ENCODE measurements at regions of chr19 and their contacts with region 1.

Region 1: DNA sequence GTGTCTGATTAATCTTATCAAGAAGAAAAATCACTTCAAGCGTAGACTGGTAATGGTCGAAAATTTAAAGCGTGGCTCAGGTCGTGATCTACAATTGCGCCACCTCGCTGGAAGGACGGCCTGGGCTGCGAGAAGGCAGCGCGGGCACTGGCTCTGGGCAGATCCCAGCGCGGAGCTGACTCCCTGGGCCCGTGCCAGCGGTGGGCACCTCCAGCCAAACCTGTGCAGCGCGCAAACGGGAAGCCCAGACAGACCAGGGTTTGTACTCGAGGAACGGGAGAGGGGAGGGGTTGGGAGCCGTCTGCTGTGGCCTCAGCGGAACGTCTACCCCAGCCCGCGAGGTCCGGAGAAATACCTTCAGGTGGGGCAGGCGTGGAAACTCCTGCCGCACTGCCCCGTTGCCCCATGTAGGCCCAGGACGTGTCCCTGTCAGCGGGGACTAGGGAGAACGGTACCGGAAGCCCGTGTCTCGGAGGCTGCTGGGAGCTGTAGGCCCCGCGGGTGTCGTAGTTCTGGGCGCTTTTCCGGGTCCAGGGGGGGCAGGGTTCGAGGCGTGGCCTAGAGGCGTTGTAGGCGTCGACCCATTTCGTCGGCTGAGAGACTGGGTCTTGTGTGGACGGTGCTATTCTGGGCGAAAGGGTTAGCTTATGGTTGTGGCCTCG is 21.1 kb downstream of the ZNF274 start:
- DNase-seq: no peak
- H3K4me3 ChIP-seq: no peak overlapping the region
- H3K27ac ChIP-seq: no peak overlapping the region
- H3K4me1 ChIP-seq: no peaks in the 10 kb centered on the region
- H3K27me3 ChIP-seq: no peaks in the 10 kb centered on the region
- CTCF ChIP-seq: no peak
- POLR2A ChIP-seq: no peak

Region 2: DNA sequence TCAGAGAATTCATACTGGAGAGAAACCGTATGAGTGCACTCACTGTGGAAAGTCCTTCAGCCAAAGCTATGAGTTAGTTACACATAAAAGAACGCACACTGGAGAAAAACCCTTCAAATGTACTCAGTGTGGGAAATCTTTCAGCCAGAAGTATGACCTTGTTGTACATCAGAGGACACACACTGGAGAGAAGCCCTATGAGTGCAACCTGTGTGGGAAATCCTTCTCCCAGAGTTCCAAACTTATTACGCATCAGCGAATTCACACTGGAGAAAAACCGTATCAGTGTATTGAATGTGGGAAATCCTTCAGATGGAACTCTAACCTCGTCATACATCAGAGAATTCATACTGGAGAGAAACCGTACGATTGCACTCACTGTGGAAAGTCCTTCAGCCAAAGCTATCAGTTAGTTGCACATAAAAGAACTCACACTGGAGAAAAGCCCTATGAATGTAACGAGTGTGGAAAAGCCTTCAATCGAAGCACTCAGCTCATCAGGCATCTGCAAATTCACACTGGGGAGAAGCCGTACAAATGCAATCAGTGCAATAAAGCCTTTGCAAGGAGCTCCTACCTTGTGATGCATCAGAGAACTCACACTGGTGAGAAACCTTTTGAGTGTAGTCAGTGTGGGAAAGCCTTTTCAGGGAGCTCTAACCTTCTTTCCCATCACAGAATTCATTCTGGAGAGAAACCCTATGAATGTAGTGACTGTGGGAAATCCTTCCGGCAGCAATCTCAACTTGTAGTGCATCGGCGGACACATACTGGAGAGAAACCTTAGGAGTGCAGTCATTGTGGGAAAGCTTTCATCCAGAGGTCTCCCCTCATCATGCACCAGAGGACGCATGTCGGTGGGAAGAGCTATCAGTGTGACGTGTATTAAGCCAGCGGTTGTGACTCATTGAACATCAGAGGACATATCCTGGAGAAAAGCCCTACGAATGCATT is 58.3 kb after region 1 on chr19:
- intact Hi-C with region 1: loop called in 1 of 2 experiments (anchors 10 kb)
- DNase-seq: no peak
- H3K4me3 ChIP-seq: peak overlapping the region in 1 of 4 donors; percentile 21
- H3K27ac ChIP-seq: no peak overlapping the region
- H3K4me1 ChIP-seq: no peaks in the 10 kb centered on the region
- H3K27me3 ChIP-seq: no peaks in the 10 kb centered on the region
- CTCF ChIP-seq: no peak
- POLR2A ChIP-seq: no peak